ENCODE measurements at regions of chr10 and their contacts with region 1.

Region 1: GRCh38 chr10:97792141-97792721 is 20.4 kb upstream of the SFRP5 start:
- DNase-seq: peak; percentile 73
- H3K4me3 Mint-ChIP-seq: no peak overlapping the region
- H3K27ac Mint-ChIP-seq: no peak overlapping the region
- H3K4me1 Mint-ChIP-seq: no peaks in the 10 kb centered on the region
- H3K27me3 Mint-ChIP-seq: peaks cover 14% of the 10 kb centered on the region
- CTCF ChIP-seq: peak; percentile 96

Region 2: GRCh38 chr10:97764519-97764931 is 27.7 kb before region 1 on chr10:
- CTCF ChIA-PET with region 1: interaction called, 11 read pairs
- POLR2A ChIA-PET with region 1: no interaction called
- intact Hi-C with region 1: no loop called
- DNase-seq: no peak
- H3K4me3 Mint-ChIP-seq: no peak overlapping the region
- H3K27ac Mint-ChIP-seq: no peak overlapping the region
- H3K4me1 Mint-ChIP-seq: no peaks in the 10 kb centered on the region
- H3K27me3 Mint-ChIP-seq: peaks cover 3% of the 10 kb centered on the region
- CTCF ChIP-seq: no peak

Region 3: GRCh38 chr10:97805096-97805884 is 13.1 kb after region 1 on chr10:
- CTCF ChIA-PET with region 1: interaction called, 83 read pairs
- POLR2A ChIA-PET with region 1: no interaction called
- intact Hi-C with region 1: no loop called
- DNase-seq: no peak
- H3K4me3 Mint-ChIP-seq: no peak overlapping the region
- H3K27ac Mint-ChIP-seq: no peak overlapping the region
- H3K4me1 Mint-ChIP-seq: peaks cover 3% of the 10 kb centered on the region
- H3K27me3 Mint-ChIP-seq: peaks cover 15% of the 10 kb centered on the region
- CTCF ChIP-seq: no peak

Region 4: GRCh38 chr10:97848994-97849686 is 56.9 kb after region 1 on chr10:
- CTCF ChIA-PET with region 1: interaction called, 13 read pairs
- POLR2A ChIA-PET with region 1: no interaction called
- intact Hi-C with region 1: no loop called
- DNase-seq: no peak
- H3K4me3 Mint-ChIP-seq: peak overlapping the region; percentile 55
- H3K27ac Mint-ChIP-seq: no peak overlapping the region
- H3K4me1 Mint-ChIP-seq: no peaks in the 10 kb centered on the region
- H3K27me3 Mint-ChIP-seq: peaks cover 41% of the 10 kb centered on the region
- CTCF ChIP-seq: no peak

Region 5: DNA sequence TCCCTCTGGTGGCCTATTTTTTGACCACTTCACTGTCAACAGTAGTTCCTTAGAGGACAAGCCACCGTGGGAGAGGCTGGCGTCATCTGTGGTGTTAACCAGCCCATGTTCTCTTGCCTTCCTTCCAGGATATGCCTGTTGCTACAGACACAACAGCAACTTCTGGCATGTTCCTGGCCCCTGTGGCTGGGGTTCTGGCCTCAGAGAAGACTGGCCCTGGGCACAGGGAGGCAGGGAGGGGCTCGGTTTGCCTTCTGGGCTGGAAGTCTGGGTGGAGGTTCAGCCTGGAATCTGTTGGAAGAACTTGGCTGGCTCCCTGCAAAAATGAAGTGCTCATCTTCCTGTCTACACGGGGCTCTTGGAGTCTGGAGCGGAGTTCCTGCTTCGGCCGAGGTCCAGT is 83.2 kb after region 1 on chr10:
- CTCF ChIA-PET with region 1: interaction called, 422 read pairs
- POLR2A ChIA-PET with region 1: no interaction called
- intact Hi-C with region 1: no loop called
- DNase-seq: no peak
- H3K4me3 Mint-ChIP-seq: no peak overlapping the region
- H3K27ac Mint-ChIP-seq: no peak overlapping the region
- H3K4me1 Mint-ChIP-seq: no peaks in the 10 kb centered on the region
- H3K27me3 Mint-ChIP-seq: no peaks in the 10 kb centered on the region
- CTCF ChIP-seq: no peak

Region 6: DNA sequence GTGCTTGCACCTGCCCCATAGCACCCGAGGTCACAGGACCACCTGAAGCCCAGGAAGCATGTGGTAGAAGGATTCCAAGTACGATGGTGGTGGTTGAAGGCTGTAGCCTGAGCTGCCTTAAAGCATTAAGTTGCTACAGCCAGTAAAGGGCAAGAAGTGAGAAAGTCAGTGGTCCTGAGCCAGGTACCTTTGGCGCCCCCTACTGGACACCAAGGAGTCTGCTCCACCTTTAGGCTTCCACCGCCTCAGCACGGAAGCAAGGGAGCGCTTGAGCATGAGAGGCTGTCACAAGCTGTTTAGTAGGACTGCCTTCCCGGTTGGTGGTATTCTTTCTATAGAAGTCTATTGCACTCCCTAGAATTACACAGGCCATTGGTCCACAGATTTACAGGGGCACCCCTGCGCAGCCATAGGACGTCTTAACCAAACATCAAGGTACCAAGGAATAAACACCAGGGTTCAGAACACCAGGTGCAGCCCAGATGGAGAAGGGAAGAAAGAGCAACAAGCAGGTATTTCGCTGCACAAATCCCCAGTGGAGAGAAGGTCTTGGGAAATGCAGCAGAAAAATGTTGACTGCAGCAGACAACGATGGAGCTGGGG is 236.0 kb after region 1 on chr10:
- CTCF ChIA-PET with region 1: interaction called, 5 read pairs
- POLR2A ChIA-PET with region 1: no interaction called
- intact Hi-C with region 1: loop called (anchors 5 kb)
- DNase-seq: peak; percentile 66
- H3K4me3 Mint-ChIP-seq: no peak overlapping the region
- H3K27ac Mint-ChIP-seq: no peak overlapping the region
- H3K4me1 Mint-ChIP-seq: no peaks in the 10 kb centered on the region
- H3K27me3 Mint-ChIP-seq: peaks cover 53% of the 10 kb centered on the region
- CTCF ChIP-seq: peak; percentile 53